ENCODE measurements at regions of chr11 and their contacts with region 1.

Region 1: DNA sequence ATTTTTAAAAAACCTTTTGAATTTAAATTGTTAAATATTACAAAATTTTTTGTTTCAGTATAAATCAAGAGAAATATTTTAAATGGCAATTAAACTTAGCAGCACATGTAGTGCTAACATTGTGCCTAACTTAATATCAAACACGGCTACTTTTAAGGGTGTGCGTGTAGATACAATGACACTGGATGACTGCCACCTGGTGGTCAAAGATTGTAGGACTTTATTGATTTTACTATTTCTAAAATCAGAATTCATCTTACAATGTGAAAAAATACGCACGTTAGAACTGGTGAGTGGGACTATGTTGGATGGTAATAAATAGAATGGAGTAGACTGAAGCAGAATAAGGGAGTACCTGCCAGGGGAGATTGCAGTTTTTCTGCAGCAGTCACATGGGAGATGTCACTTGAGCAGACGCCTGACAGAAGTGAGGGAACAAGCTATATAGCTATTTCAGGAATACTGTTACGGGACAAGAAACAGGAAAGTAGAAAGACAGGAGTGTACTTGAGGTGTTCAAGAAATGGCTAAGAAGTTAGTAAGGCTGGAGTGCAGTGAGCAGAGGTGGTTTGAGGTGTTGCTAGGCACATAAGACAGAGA is 52.9 kb downstream of the UVRAG start:
- DNase-seq: peak; percentile 24
- ATAC-seq: peak; percentile 84
- H3K4me3 ChIP-seq: no peak overlapping the region
- H3K27ac ChIP-seq: no peak overlapping the region
- H3K4me1 ChIP-seq: peaks cover 15% of the 10 kb centered on the region
- H3K27me3 ChIP-seq: no peaks in the 10 kb centered on the region
- CTCF ChIP-seq: peak; percentile 50 to 65 (median 65); a peak in 5 of 6 replicates
- EP300 ChIP-seq: no peak
- POLR2A ChIP-seq: no peak
- RAD21 ChIP-seq: peak; percentile 84

Region 2: DNA sequence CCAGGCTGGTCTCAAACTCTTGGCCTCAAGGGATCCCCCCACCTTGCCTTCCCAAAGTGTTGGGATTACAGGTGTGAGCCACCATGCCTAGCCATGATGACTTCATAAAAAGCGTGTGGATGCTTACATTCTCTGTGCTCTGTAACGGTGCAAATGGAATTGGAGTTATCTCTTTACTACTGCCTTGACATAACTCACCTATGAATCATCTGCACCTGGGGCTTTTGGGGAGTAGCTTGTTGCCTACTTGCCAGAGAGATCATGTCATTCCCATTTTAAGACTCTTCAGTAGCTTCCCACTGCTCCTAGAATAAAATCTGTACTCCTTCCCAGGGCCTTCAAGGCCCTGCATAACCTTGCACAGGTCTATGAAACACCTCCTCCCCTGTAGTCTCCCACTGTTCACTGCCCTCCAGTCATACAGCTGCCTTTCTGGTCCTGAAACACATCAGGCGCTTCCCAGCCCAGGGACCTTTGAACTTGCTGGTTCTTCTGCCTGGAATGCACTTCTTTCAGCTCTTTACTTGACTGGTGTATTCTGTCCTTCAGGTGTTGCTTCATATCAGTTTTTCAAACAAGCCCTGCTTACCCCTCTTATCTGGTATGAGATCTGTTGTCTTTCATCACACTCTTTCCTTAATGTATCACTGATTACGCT is 169.8 kb before region 1 on chr11:
- CTCF ChIA-PET with region 1: no interaction called
- POLR2A ChIA-PET with region 1: no interaction called
- RAD21 ChIA-PET with region 1: no interaction called
- SMC1A ChIA-PET with region 1: no interaction called
- in situ Hi-C with region 1: no loop called
- intact Hi-C with region 1: no loop called
- DNase-seq: no peak
- ATAC-seq: no peak
- H3K4me3 ChIP-seq: no peak overlapping the region
- H3K27ac ChIP-seq: no peak overlapping the region
- H3K4me1 ChIP-seq: no peaks in the 10 kb centered on the region
- H3K27me3 ChIP-seq: no peaks in the 10 kb centered on the region
- CTCF ChIP-seq: no peak
- EP300 ChIP-seq: no peak
- POLR2A ChIP-seq: no peak
- RAD21 ChIP-seq: no peak

Region 3: GRCh38 chr11:75717608-75718418 is 150.1 kb before region 1 on chr11 and contains the start of gene MOGAT2:
- CTCF ChIA-PET with region 1: interaction called, 19 read pairs
- POLR2A ChIA-PET with region 1: no interaction called
- RAD21 ChIA-PET with region 1: interaction called, 5 read pairs
- SMC1A ChIA-PET with region 1: no interaction called
- in situ Hi-C with region 1: loop called (anchors 10 kb)
- intact Hi-C with region 1: loop called (anchors 2 kb)
- DNase-seq: no peak
- ATAC-seq: no peak
- H3K4me3 ChIP-seq: no peak within 1 kb of the TSS
- H3K27ac ChIP-seq: no peak within 1 kb of the TSS
- H3K4me1 ChIP-seq: peaks cover 11% of the 10 kb centered on the region
- H3K27me3 ChIP-seq: no peaks in the 10 kb centered on the region
- CTCF ChIP-seq: no peak
- EP300 ChIP-seq: no peak
- POLR2A ChIP-seq: no peak
- RAD21 ChIP-seq: no peak
- polyA plus RNA-seq, gene MOGAT2: 0.16 to 0.21 TPM

Region 4: DNA sequence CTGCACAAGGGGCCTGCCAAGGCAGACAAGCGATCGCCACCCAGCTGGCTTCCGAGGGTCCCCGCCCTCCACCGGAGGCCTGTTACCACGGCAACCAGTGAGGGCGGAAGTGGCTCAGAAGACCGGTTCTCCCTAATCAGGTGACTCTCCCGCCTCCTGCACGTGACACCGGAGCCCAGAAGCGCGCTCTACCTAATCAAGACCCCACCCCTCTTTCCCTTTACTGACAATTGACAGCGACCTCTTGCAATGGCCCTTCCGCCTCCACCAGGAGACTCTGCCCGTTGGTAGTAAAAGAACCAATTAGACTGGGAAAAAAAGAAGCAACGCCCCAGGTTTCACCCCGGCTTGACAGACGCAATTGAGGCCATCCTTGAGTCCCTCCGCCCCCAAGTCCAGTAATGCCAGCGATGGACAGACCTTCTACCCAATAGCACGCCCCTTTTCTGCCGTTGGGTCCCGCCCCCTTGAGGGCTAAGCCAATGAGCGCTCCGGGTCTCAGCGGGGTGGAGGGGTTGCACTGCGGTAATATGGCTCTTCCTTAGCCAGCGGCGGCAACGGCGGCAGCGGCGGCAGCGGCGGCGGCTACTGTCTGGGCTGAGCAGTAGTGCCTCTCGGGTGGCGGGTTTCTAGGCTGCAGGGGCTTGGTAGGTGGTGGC is 53.1 kb before region 1 on chr11 and contains the start of gene UVRAG:
- CTCF ChIA-PET with region 1: interaction called, 183 read pairs
- POLR2A ChIA-PET with region 1: interaction called, 36 read pairs
- RAD21 ChIA-PET with region 1: interaction called, 100 read pairs
- SMC1A ChIA-PET with region 1: interaction called, 111 read pairs
- in situ Hi-C with region 1: no loop called
- intact Hi-C with region 1: loop called (anchors 1 kb)
- DNase-seq: peak; percentile 100
- ATAC-seq: peak; percentile 86
- H3K4me3 ChIP-seq: peak within 1 kb of the TSS; percentile 93
- H3K27ac ChIP-seq: peak within 1 kb of the TSS; percentile 94
- H3K4me1 ChIP-seq: peaks cover 39% of the 10 kb centered on the region
- H3K27me3 ChIP-seq: no peaks in the 10 kb centered on the region
- CTCF ChIP-seq: no peak
- EP300 ChIP-seq: no peak
- POLR2A ChIP-seq: peak; percentile 87
- RAD21 ChIP-seq: no peak
- polyA plus RNA-seq, gene UVRAG: 7.0 to 11.2 TPM

Region 5: GRCh38 chr11:75836417-75836816 is 31.5 kb before region 1 on chr11:
- CTCF ChIA-PET with region 1: interaction called, 131 read pairs
- POLR2A ChIA-PET with region 1: interaction called, 6 read pairs
- RAD21 ChIA-PET with region 1: interaction called, 6 read pairs
- SMC1A ChIA-PET with region 1: interaction called, 13 read pairs
- in situ Hi-C with region 1: no loop called
- intact Hi-C with region 1: no loop called
- DNase-seq: no peak
- ATAC-seq: peak; percentile 84
- H3K4me3 ChIP-seq: peak overlapping the region; percentile 18; the same call in 1 of the 2 replicates
- H3K27ac ChIP-seq: peak overlapping the region; percentile 58
- H3K4me1 ChIP-seq: peaks cover 17% of the 10 kb centered on the region
- H3K27me3 ChIP-seq: no peaks in the 10 kb centered on the region
- CTCF ChIP-seq: no peak
- EP300 ChIP-seq: no peak
- POLR2A ChIP-seq: no peak
- RAD21 ChIP-seq: no peak

Region 6: DNA sequence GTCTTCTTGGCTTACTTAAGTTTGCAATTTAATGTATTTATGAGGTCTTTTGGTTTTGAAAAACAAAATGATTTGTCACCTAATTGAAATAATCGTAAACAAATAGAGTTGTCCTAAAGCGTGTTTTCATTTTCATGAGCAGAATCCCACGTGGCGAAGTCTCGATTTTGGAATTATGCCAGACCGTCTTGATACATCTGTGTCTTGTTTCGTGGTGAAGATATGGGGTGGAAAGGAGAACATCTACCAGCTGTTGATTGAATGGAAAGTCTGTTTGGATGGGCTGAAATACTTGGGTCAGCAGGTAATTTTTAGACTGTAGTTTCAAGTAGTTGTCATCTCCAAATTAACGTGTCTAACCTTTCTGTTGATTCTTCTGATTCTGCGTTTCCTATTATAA is 11.9 kb after region 1 on chr11:
- CTCF ChIA-PET with region 1: interaction called, 12 read pairs
- POLR2A ChIA-PET with region 1: interaction called, 3 read pairs
- RAD21 ChIA-PET with region 1: interaction called, 3 read pairs
- SMC1A ChIA-PET with region 1: interaction called, 8 read pairs
- in situ Hi-C with region 1: no loop called
- intact Hi-C with region 1: no loop called
- DNase-seq: no peak
- ATAC-seq: no peak
- H3K4me3 ChIP-seq: no peak overlapping the region
- H3K27ac ChIP-seq: no peak overlapping the region
- H3K4me1 ChIP-seq: peaks cover 2% of the 10 kb centered on the region; the same call in 1 of the 2 replicates
- H3K27me3 ChIP-seq: no peaks in the 10 kb centered on the region
- CTCF ChIP-seq: no peak
- EP300 ChIP-seq: no peak
- POLR2A ChIP-seq: no peak
- RAD21 ChIP-seq: no peak